Vagina (tissue), 2 donors: ENCODE measurements at regions of chr6 and their contacts with region 1.

Region 1: DNA sequence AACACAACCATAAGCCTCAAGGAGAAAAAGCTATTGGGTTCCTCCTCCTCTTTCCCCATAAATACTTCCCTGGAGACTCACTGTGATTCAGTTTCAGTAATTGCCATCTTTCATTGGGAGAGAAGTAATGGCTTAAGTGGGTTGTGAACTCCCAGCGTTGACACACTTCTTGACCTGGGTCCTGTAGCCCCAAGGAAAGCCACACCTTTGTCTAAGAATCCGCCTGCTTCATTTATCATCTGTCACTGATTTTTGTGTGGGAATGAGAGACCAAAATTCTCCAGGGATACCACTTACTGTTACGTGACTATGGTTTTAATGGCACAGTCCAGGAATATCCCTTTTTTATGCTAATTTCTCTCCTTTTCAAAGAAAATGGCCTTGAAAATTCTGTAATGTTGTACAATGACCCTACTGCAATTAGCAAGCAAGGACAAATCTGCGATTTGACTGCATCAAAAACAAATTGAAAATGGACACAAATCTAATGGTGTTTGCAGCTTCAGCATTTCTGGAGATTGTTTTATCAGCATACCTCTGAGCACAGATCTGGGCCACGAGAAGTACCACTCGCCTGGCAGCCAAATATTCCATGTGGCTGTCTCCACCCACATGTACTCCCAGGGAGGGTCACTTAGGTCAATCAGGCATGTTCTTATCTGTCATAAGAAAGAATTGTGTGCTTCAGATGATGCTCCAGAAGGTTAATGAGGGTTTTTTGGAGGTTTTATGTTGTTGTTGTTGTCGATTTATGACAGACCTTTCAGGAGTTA is 29.8 kb downstream of the DCBLD1 start:
- DNase-seq: no peak
- H3K4me3 ChIP-seq: no peak overlapping the region
- H3K27ac ChIP-seq: no peak overlapping the region
- H3K4me1 ChIP-seq: peaks cover 11% of the 10 kb centered on the region
- H3K27me3 ChIP-seq: no peaks in the 10 kb centered on the region
- CTCF ChIP-seq: no peak
- POLR2A ChIP-seq: no peak

Region 2: GRCh38 chr6:115706330-115706729 is 1805.9 kb before region 1 on chr6:
- intact Hi-C with region 1: no loop called
- DNase-seq: no peak
- H3K4me3 ChIP-seq: no peak overlapping the region
- H3K27ac ChIP-seq: no peak overlapping the region
- H3K4me1 ChIP-seq: no peaks in the 10 kb centered on the region
- H3K27me3 ChIP-seq: no peaks in the 10 kb centered on the region
- CTCF ChIP-seq: no peak
- POLR2A ChIP-seq: no peak

Region 3: DNA sequence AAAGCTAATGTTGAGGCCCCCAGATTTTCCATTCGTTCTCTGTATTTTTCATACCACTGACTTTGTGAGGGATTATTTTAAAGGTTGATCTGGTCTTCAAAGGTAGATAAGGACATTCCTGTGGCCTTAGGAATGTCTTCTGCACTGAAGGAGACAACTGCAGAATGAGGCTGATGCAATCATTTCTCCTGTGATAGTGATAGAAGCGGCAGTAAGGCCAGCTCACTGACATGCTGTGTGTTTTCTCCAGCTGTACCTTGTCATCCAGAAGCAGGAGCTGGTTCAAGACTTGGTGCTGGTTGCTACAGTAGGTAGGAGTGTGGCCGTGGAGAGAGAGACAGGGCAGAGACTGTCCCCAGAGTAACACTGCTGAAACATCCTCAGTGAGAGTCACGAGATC is 24.1 kb after region 1 on chr6:
- intact Hi-C with region 1: loop called (anchors 1 kb)
- DNase-seq: no peak
- H3K4me3 ChIP-seq: no peak overlapping the region
- H3K27ac ChIP-seq: no peak overlapping the region
- H3K4me1 ChIP-seq: no peaks in the 10 kb centered on the region
- H3K27me3 ChIP-seq: no peaks in the 10 kb centered on the region
- CTCF ChIP-seq: no peak
- POLR2A ChIP-seq: no peak

Region 4: GRCh38 chr6:118249680-118250079 is 737.4 kb after region 1 on chr6:
- intact Hi-C with region 1: no loop called
- DNase-seq: no peak
- H3K4me3 ChIP-seq: no peak overlapping the region
- H3K27ac ChIP-seq: no peak overlapping the region
- H3K4me1 ChIP-seq: no peaks in the 10 kb centered on the region
- H3K27me3 ChIP-seq: no peaks in the 10 kb centered on the region
- CTCF ChIP-seq: no peak
- POLR2A ChIP-seq: no peak